BJ (cell line): ENCODE measurements at regions of chr21 and their contacts with region 1.

Region 1: GRCh38 chr21:26732432-26733221 is 112.6 kb downstream of the ADAMTS1 start:
- DNase-seq: no peak
- H3K4me3 ChIP-seq: no peak overlapping the region
- H3K27me3 ChIP-seq: no peaks in the 10 kb centered on the region
- CTCF ChIP-seq: peak; percentile 76

Region 2: DNA sequence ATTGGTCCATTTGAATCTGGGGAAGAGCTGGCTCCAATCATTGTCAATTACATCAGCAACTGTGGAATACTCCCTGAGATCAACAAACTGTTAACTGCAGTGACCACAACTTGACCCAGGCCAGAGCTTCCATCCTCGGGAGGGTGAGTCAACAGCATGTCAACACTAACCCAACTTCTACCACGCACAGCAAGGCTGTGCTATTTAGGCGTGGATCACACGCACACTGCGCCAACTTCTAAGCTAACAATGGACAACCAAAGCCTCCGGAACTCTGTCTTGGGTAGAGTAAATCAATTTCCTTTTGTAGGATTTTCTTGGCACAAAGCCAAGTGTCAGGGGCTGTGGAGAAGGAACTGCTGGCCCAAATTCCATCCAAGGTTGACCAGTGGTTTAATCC is 592.4 kb before region 1 on chr21:
- CTCF ChIA-PET with region 1: no interaction called
- POLR2A ChIA-PET with region 1: no interaction called
- DNase-seq: peak; percentile 85
- H3K4me3 ChIP-seq: no peak overlapping the region
- H3K27me3 ChIP-seq: no peaks in the 10 kb centered on the region
- CTCF ChIP-seq: no peak

Region 3: GRCh38 chr21:26495283-26495845 is 237.3 kb before region 1 on chr21:
- CTCF ChIA-PET with region 1: no interaction called
- POLR2A ChIA-PET with region 1: no interaction called
- DNase-seq: no peak
- H3K4me3 ChIP-seq: no peak overlapping the region
- H3K27me3 ChIP-seq: no peaks in the 10 kb centered on the region
- CTCF ChIP-seq: no peak

Region 4: DNA sequence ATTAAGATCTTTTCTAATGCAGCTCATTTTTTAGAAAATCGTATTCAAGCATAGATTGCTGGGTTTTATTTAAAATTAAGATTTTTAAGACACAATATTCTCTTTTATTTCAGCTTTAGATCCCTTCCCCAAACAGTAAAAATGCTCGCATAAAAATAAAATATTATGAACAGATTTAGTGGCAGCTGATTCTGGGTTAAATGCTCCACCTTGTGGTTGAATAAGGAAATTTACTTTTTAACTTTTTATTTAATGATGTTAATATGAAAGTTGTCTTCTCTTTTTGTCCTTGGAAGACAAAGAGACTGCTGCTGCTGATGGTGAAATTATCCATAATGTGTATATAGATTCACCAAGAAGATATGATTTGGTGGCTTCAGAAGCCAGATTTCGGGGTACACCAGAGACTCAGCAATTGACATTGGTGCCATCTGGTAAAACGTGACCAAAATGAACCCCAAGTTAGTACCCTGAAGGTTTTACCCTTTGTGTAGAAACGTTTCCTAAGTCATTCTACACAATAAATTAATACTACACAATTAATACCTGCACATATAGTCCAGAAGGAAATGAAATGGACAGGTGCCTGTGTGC is 15.4 kb before region 1 on chr21:
- CTCF ChIA-PET with region 1: interaction called, 13 read pairs
- POLR2A ChIA-PET with region 1: no interaction called
- DNase-seq: no peak
- H3K4me3 ChIP-seq: no peak overlapping the region
- H3K27me3 ChIP-seq: no peaks in the 10 kb centered on the region
- CTCF ChIP-seq: peak; percentile 54

Region 5: GRCh38 chr21:26743524-26743923 is 10.9 kb after region 1 on chr21:
- CTCF ChIA-PET with region 1: interaction called, 10 read pairs
- POLR2A ChIA-PET with region 1: no interaction called
- DNase-seq: no peak
- H3K4me3 ChIP-seq: no peak overlapping the region
- H3K27me3 ChIP-seq: no peaks in the 10 kb centered on the region
- CTCF ChIP-seq: no peak

Region 6: GRCh38 chr21:26756491-26757159 is 24.0 kb after region 1 on chr21:
- CTCF ChIA-PET with region 1: interaction called, 16 read pairs
- POLR2A ChIA-PET with region 1: interaction called, 3 read pairs
- DNase-seq: no peak
- H3K4me3 ChIP-seq: no peak overlapping the region
- H3K27me3 ChIP-seq: no peaks in the 10 kb centered on the region
- CTCF ChIP-seq: no peak

Region 7: GRCh38 chr21:27070861-27071670 is 338.4 kb after region 1 on chr21:
- CTCF ChIA-PET with region 1: no interaction called
- POLR2A ChIA-PET with region 1: no interaction called
- DNase-seq: no peak
- H3K4me3 ChIP-seq: no peak overlapping the region
- H3K27me3 ChIP-seq: no peaks in the 10 kb centered on the region
- CTCF ChIP-seq: no peak